OCI-LY7 (cell line): ENCODE measurements at regions of chr6 and their contacts with region 1.

Region 1: GRCh38 chr6:24494821-24495795 is at the start of gene ALDH5A1:
- DNase-seq: peak; percentile 92
- H3K4me3 ChIP-seq: peak within 1 kb of the TSS; percentile 92
- H3K27ac ChIP-seq: peak within 1 kb of the TSS; percentile 84
- H3K4me1 ChIP-seq: peaks cover 55% of the 10 kb centered on the region
- CTCF ChIP-seq: peak; percentile 65
- total RNA-seq, gene ALDH5A1: 180 and 199 TPM in 2 replicates

Region 2: DNA sequence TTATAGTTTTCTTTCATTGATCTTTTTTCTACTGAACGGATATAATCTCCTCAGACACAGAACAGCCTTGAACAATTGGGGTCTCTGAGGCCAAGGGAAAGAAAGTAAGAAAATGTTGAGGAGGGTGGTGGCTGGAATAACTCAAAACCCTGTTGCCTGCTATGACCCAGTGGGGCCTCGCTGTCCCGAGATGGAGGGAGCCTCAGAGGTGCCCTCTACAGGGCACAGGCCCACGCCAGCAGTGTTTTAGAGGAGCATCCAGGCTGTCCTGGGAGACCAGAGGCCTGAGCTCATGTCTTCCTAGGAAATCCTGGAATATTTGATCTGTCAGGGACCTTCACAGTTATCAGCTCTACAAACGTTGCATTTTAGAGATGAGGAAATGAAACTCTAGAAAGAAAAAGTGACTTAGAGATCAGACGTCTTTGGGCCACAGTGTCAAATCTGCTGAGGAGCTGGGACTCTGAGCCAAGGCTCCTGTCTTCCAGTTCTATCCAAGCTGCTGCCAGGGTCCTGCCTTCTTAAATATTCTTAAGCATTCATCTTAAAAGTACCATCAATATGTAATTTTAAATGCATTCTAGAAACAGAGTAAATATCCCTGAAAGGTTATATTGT is 25.9 kb after region 1 on chr6:
- CTCF ChIA-PET with region 1: interaction called, 41 read pairs
- POLR2A ChIA-PET with region 1: interaction called, 586 read pairs
- intact Hi-C with region 1: loop called (anchors 1 kb)
- DNase-seq: peak; percentile 80
- H3K4me3 ChIP-seq: peak overlapping the region; percentile 20
- H3K27ac ChIP-seq: peak overlapping the region; percentile 98
- H3K4me1 ChIP-seq: peaks cover 79% of the 10 kb centered on the region
- CTCF ChIP-seq: peak; percentile 95

Region 3: GRCh38 chr6:24581084-24581669 is 86.1 kb after region 1 on chr6:
- CTCF ChIA-PET with region 1: interaction called, 4 read pairs
- POLR2A ChIA-PET with region 1: interaction called, 4 read pairs
- intact Hi-C with region 1: loop called (anchors 2 kb)
- DNase-seq: peak; percentile 84
- H3K4me3 ChIP-seq: no peak overlapping the region
- H3K27ac ChIP-seq: no peak overlapping the region
- H3K4me1 ChIP-seq: peaks cover 16% of the 10 kb centered on the region
- CTCF ChIP-seq: peak; percentile 94

Region 4: DNA sequence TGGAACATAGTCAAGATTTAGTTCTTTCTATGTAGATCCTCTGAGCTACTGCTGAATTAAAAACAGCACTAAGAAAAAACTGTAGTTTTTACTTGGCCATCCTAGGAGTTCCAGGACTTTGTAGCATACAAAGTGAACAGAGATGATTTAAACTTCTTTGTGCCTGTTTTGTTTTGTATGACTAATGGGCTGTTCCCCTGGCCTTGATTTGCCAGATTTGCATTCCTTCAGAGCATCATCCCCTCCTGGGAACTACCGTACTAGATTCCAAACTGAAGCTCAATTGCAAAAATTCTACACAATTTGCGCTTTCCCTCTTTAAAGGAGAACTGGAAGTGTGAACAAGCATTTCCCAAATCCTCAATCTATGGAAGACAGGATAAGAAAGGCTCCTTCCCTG is 194.9 kb after region 1 on chr6:
- CTCF ChIA-PET with region 1: no interaction called
- POLR2A ChIA-PET with region 1: no interaction called
- intact Hi-C with region 1: loop called (anchors 2 kb)
- DNase-seq: no peak
- H3K4me3 ChIP-seq: no peak overlapping the region
- H3K27ac ChIP-seq: no peak overlapping the region
- H3K4me1 ChIP-seq: peaks cover 7% of the 10 kb centered on the region
- CTCF ChIP-seq: no peak

Region 5: GRCh38 chr6:24883618-24884017 is 388.5 kb after region 1 on chr6:
- CTCF ChIA-PET with region 1: no interaction called
- POLR2A ChIA-PET with region 1: no interaction called
- intact Hi-C with region 1: loop called (anchors 10 kb)
- DNase-seq: peak; percentile 85
- H3K4me3 ChIP-seq: peak overlapping the region; percentile 46
- H3K27ac ChIP-seq: peak overlapping the region; percentile 83
- H3K4me1 ChIP-seq: peaks cover 94% of the 10 kb centered on the region
- CTCF ChIP-seq: no peak

Region 6: DNA sequence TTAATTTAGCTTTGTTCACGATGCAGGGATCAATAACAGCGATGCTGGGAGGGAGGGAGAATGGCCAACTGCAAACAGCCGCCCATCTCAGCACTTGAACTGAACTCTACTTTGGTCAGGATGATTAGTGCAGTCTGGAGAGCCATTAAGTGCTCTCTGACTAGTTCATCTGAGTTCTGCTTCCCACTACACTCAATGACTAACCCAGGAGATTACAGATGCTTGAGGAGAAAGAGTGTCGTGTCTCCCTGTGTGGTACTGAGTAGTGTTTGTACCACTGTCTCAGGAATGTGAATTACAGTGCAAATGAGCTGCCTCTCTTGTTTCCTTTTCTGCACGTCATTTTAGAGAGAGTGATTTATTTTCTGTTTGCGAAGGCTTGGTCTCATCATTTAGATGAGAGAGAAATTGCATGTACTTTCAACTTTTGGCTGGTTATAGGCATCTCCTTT is 807.6 kb after region 1 on chr6:
- CTCF ChIA-PET with region 1: no interaction called
- POLR2A ChIA-PET with region 1: no interaction called
- intact Hi-C with region 1: loop called (anchors 5 kb)
- DNase-seq: no peak
- H3K4me3 ChIP-seq: peak overlapping the region; percentile 50
- H3K27ac ChIP-seq: peak overlapping the region; percentile 85
- H3K4me1 ChIP-seq: peaks cover 87% of the 10 kb centered on the region
- CTCF ChIP-seq: no peak

Region 7: DNA sequence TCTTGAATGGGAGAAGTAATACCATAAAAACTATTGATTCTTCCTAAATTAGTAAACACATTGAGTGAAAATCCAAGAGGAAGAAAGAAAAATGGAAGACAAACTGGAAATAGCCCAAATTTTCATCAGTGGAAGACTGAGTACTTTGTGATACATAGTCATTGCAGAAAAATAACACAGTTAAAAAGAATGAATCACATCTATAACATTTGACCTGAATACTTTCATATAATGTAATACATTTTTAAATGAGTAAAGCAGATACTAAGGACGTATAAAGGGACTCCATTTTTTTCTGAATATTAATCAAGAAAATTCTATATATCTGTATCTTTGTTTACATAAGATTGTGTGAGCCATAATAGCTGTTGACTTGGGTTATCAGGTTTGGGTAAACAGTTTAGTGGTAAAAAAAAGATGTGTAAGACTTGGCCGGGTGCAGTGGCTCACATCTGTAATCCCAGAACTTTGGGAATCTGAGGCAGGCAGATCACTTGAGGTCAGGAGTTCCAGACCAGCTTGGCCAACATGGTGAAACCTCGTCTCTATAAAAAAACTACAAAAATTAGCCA is 1439.7 kb after region 1 on chr6:
- CTCF ChIA-PET with region 1: no interaction called
- POLR2A ChIA-PET with region 1: no interaction called
- intact Hi-C with region 1: no loop called
- DNase-seq: no peak
- H3K4me3 ChIP-seq: no peak overlapping the region
- H3K27ac ChIP-seq: no peak overlapping the region
- H3K4me1 ChIP-seq: no peaks in the 10 kb centered on the region
- CTCF ChIP-seq: no peak